Psoas muscle (tissue), 8 donors: ENCODE measurements at regions of chr5 and their contacts with region 1.

Region 1: DNA sequence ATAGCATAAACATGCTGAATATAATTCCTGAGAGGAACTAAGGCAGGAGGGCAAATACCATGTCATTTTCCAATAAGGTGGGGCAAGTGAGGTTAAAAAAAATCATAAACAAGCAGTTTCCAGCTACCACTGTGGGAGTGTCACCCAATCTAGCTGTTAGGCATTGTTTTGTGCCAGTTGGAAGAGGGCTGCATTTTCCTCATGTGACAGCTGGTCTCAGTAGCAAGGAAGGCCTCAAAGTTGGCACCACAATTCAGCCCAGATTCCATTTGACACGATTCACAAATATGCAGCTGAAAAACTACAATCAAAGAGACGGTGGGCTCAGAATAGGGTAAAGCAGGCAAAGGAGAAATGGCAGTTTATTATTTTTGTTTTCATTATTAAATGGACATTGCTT is 636.1 kb downstream of the KIF4B start:
- DNase-seq: no peak
- ATAC-seq: no peak
- H3K4me3 ChIP-seq: no peak overlapping the region
- H3K27ac ChIP-seq: no peak overlapping the region
- H3K4me1 ChIP-seq: peaks cover 5% of the 10 kb centered on the region
- H3K27me3 ChIP-seq: no peaks in the 10 kb centered on the region
- CTCF ChIP-seq: no peak

Region 2: GRCh38 chr5:155631116-155631515 is 18.6 kb before region 1 on chr5:
- intact Hi-C with region 1: loop called in 1 of 2 experiments (anchors 1 kb)
- DNase-seq: no peak
- ATAC-seq: peak in 1 of 4 donors; percentile 11
- H3K4me3 ChIP-seq: no peak overlapping the region
- H3K27ac ChIP-seq: no peak overlapping the region
- H3K4me1 ChIP-seq: no peaks in the 10 kb centered on the region
- H3K27me3 ChIP-seq: no peaks in the 10 kb centered on the region
- CTCF ChIP-seq: no peak

Region 3: DNA sequence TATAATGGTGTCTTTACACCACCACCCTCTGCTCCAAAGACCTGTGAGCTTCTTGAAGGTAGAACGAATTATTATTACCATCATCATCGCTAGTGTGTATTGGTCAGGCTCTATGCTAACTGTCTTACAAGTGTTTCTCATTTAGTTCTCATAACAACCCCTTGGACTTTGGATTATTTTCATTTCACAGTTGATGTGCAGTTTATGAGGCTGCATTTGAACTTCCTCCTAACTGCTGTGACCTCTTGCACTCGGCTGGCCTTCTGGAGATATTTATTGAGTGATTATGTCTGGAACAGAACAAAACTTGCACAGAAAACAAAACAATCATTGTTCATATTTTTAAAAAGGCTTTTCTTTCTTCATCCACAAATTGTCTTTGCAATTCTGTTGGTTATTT is 371.0 kb after region 1 on chr5:
- intact Hi-C with region 1: no loop called
- DNase-seq: no peak
- ATAC-seq: no peak
- H3K4me3 ChIP-seq: no peak overlapping the region
- H3K27ac ChIP-seq: no peak overlapping the region
- H3K4me1 ChIP-seq: no peaks in the 10 kb centered on the region
- H3K27me3 ChIP-seq: no peaks in the 10 kb centered on the region
- CTCF ChIP-seq: no peak